CD4-positive, alpha-beta T cell (primary cell): ENCODE measurements at regions of chr6 and their contacts with region 1.

Region 1: GRCh38 chr6:90230548-90231215 is 66.0 kb downstream of the BACH2 start:
- DNase-seq: no peak
- ATAC-seq: no peak
- H3K4me3 ChIP-seq: no peak overlapping the region
- H3K4me3 Mint-ChIP-seq: peak overlapping the region; percentile 40
- H3K27ac ChIP-seq: peak overlapping the region in 1 of 2 donors; percentile 80
- H3K27ac Mint-ChIP-seq: peak overlapping the region; percentile 96
- H3K4me1 ChIP-seq: peaks cover 46% of the 10 kb centered on the region
- H3K4me1 Mint-ChIP-seq: peaks cover 97% of the 10 kb centered on the region
- H3K27me3 ChIP-seq: no peaks in the 10 kb centered on the region
- H3K27me3 Mint-ChIP-seq: no peaks in the 10 kb centered on the region
- CTCF ChIP-seq: no peak

Region 2: GRCh38 chr6:90184334-90185298 is 46.1 kb before region 1 on chr6:
- CTCF ChIA-PET with region 1: no interaction called
- POLR2A ChIA-PET with region 1: no interaction called
- intact Hi-C with region 1: loop called in 1 of 2 experiments (anchors 5 kb)
- DNase-seq: peak in 3 of 14 experiments; percentile 22 to 47 (median 40)
- ATAC-seq: peak; percentile 25
- H3K4me3 ChIP-seq: no peak overlapping the region
- H3K4me3 Mint-ChIP-seq: peak overlapping the region; percentile 76
- H3K27ac ChIP-seq: peak overlapping the region in 1 of 2 donors; percentile 17
- H3K27ac Mint-ChIP-seq: peak overlapping the region; percentile 99
- H3K4me1 ChIP-seq: peaks cover 26% of the 10 kb centered on the region
- H3K4me1 Mint-ChIP-seq: peaks cover 85% of the 10 kb centered on the region
- H3K27me3 ChIP-seq: no peaks in the 10 kb centered on the region
- H3K27me3 Mint-ChIP-seq: no peaks in the 10 kb centered on the region
- CTCF ChIP-seq: no peak

Region 3: DNA sequence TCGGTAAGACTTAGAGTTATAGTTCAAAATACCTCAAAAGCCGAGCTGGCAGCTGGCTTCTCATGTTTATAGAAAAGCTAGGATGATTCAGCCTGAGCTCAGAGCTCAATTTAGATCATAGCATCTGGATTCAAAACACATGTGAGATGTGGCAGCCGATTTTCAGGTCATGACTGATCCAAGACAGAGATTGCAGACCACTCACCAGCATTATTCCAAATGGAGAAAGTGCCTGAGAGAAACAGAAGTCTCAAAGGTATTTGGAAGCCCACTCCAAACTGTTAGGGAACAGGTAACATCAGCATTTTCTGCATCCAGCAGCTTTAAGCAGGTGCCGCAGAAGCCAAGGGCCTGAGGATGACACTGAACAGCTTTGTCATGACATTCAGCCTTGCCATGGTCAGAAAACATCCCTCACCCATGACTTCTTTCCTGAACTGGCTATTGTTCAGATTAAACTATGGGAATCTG is 36.3 kb before region 1 on chr6:
- CTCF ChIA-PET with region 1: no interaction called
- POLR2A ChIA-PET with region 1: no interaction called
- intact Hi-C with region 1: loop called (anchors 5 kb)
- DNase-seq: peak in 2 of 14 experiments; percentile 13 to 42
- ATAC-seq: peak; percentile 51
- H3K4me3 ChIP-seq: no peak overlapping the region
- H3K4me3 Mint-ChIP-seq: peak overlapping the region; percentile 55
- H3K27ac ChIP-seq: peak overlapping the region in 1 of 2 donors; percentile 24
- H3K27ac Mint-ChIP-seq: peak overlapping the region; percentile 99
- H3K4me1 ChIP-seq: peaks cover 27% of the 10 kb centered on the region
- H3K4me1 Mint-ChIP-seq: peaks cover 90% of the 10 kb centered on the region
- H3K27me3 ChIP-seq: no peaks in the 10 kb centered on the region
- H3K27me3 Mint-ChIP-seq: no peaks in the 10 kb centered on the region
- CTCF ChIP-seq: no peak

Region 4: DNA sequence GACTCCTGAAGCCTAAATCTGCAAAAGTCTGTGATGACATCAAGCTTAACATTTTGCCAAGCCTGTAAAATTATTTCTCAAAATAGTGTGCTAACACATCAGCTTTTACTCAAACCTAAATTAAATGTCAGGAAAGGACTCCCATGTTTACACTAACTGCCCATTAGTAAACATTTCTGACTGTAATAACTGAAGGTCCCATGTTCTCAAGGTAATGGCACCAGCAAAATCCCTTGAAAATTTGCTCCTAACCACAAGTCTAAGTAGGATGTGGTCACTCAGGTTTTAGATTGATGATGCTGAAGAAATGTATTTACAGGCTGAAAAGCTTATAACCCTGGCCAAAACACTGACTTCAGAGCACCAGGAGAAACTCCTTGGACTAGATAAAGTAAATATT is 33.0 kb after region 1 on chr6:
- CTCF ChIA-PET with region 1: no interaction called
- POLR2A ChIA-PET with region 1: interaction called, 7 read pairs
- intact Hi-C with region 1: loop called in 1 of 2 experiments (anchors 1 kb)
- DNase-seq: peak in 1 of 14 experiments; percentile 46
- ATAC-seq: no peak
- H3K4me3 ChIP-seq: no peak overlapping the region
- H3K4me3 Mint-ChIP-seq: peak overlapping the region; percentile 40
- H3K27ac ChIP-seq: no peak overlapping the region
- H3K27ac Mint-ChIP-seq: peak overlapping the region; percentile 96
- H3K4me1 ChIP-seq: peaks cover 19% of the 10 kb centered on the region
- H3K4me1 Mint-ChIP-seq: peaks cover 97% of the 10 kb centered on the region
- H3K27me3 ChIP-seq: no peaks in the 10 kb centered on the region
- H3K27me3 Mint-ChIP-seq: no peaks in the 10 kb centered on the region
- CTCF ChIP-seq: no peak

Region 5: DNA sequence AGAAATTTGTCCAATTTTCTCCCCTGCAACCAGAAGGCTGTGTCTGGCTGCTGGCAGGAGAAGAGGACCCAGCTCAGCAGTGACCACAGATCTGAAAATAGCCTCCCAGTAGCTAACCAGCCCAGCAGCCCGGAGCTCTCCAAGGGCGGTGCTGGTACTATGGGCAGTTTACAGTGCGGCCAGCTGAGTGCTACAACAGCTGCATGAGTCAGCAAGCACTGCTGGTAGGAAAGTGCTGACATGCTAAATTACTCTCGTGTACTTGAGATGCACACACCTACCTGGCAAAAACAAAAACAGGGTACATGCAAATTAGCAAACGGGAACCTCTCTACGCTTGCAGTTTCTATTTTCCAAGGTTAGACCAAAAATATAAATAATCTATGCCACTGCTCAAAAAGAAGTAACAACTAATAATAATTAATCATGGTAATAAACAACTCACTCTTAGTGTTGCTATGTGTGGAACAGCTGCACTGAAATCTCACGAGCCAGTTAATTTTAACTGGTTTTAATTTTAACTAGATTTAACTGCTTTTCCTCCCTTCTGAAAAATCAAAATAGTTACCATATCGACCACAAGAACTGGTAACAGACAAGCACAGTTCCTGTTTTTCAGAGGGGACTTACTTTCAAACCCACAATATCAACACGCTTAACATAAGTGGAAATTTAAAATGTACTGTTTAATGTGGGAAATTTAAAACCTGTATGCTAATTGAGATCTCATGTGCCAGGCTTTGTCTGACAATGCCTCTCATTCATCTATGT is 55.1 kb after region 1 on chr6:
- CTCF ChIA-PET with region 1: no interaction called
- POLR2A ChIA-PET with region 1: interaction called, 3 read pairs
- intact Hi-C with region 1: loop called in 1 of 2 experiments (anchors 5 kb)
- DNase-seq: peak in 11 of 14 experiments; percentile 21 to 79 (median 45)
- ATAC-seq: peak; percentile 47
- H3K4me3 ChIP-seq: peak overlapping the region; percentile 54
- H3K4me3 Mint-ChIP-seq: peak overlapping the region; percentile 83
- H3K27ac ChIP-seq: peak overlapping the region; percentile 12 to 80
- H3K27ac Mint-ChIP-seq: peak overlapping the region; percentile 91
- H3K4me1 ChIP-seq: peaks cover 38% of the 10 kb centered on the region
- H3K4me1 Mint-ChIP-seq: peaks cover 93% of the 10 kb centered on the region
- H3K27me3 ChIP-seq: no peaks in the 10 kb centered on the region
- H3K27me3 Mint-ChIP-seq: no peaks in the 10 kb centered on the region
- CTCF ChIP-seq: no peak

Region 6: DNA sequence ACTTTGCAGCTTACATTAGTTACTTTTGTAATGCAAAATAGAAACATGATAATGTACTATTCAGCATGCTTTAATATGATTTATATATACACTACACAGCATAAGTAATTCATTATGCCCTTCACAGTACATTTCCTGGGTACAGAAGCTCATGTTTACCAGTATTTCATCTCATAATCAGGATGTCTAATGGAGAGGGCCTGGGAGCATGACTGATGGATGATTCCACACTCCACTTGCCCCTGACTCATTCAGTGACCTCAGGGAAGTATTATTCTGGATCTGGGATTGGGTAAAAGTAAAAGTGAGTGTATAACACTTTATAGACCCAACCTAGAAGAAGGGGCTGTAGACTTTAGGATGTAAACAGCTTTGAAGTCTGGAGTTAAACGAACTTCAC is 97.3 kb after region 1 on chr6:
- CTCF ChIA-PET with region 1: no interaction called
- POLR2A ChIA-PET with region 1: no interaction called
- intact Hi-C with region 1: no loop called
- DNase-seq: no peak
- ATAC-seq: no peak
- H3K4me3 ChIP-seq: no peak overlapping the region
- H3K4me3 Mint-ChIP-seq: no peak overlapping the region
- H3K27ac ChIP-seq: no peak overlapping the region
- H3K27ac Mint-ChIP-seq: no peak overlapping the region
- H3K4me1 ChIP-seq: no peaks in the 10 kb centered on the region
- H3K4me1 Mint-ChIP-seq: no peaks in the 10 kb centered on the region
- H3K27me3 ChIP-seq: no peaks in the 10 kb centered on the region
- H3K27me3 Mint-ChIP-seq: no peaks in the 10 kb centered on the region
- CTCF ChIP-seq: no peak